ENCODE measurements at regions of chr19 and their contacts with region 1.

Region 1: GRCh38 chr19:42450314-42450934 is 7.7 kb upstream of the CXCL17 start:
- DNase-seq: peak; percentile 77
- ATAC-seq: peak; percentile 86

Region 2: GRCh38 chr19:42529248-42529764 is 78.9 kb after region 1 on chr19:
- intact Hi-C with region 1: loop called (anchors 5 kb)
- DNase-seq: peak; percentile 58
- ATAC-seq: peak; percentile 86

Measured in left ventricle myocardium superior (tissue), 1 donor.